Heart left ventricle (tissue), 16 donors: ENCODE measurements at regions of chr7 and their contacts with region 1.

Region 1: DNA sequence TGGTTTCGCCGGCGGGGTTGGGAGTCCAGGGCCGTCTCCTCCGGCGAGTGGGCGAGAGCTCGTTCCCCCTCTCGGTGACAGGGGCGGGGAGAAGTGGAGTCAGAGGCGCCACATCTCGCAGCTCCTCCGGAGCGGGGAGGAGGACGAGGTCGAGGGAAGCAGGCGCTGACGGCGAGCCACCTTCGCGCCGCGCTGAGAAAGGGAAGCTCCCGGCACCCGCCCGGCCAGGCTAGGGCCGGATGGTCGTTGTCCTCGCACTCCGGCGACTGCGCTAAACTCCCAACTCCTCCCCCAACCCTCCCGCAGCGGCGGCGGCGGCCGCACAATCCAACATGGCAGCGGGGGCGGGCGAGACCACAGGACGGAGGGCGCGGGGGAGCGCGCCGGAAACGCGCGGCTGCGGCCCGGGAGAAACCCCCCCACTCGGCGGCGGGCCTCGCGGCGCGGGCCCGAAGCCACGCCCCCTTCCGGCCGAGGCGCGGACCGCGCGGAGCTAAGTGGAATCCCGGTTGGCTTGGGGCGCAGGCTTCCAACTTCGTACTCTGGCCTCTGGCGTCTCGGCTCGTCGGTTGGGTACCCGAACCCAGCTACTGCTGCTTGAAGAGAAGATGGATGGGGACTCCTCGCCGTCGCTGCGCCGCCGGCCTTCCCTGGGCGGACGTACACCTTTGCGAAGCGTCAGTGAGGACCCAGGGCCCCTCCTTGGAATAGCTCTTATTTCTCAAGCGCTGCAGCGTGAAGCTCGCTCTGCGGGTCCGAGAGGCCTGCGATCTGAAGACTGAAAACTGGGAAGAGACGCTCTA is at the start of gene WASL:
- DNase-seq: peak; percentile 93 to 97 (median 94)
- ATAC-seq: peak; percentile 89 to 97 (median 92)
- H3K4me3 ChIP-seq: peak within 1 kb of the TSS; percentile 83 to 92 (median 87)
- H3K27ac ChIP-seq: peak within 1 kb of the TSS; percentile 95 to 99 (median 98)
- H3K4me1 ChIP-seq: peaks cover 4 to 62% (median 47%) of the 10 kb centered on the region in 12 donors
- H3K27me3 ChIP-seq: no peaks in the 10 kb centered on the region
- CTCF ChIP-seq: peak in 6 of 12 donors; percentile 9 to 43 (median 26)
- POLR2A ChIP-seq: peak; percentile 63 to 94
- total RNA-seq, gene WASL: 20.1 to 30.3 (median 26.4) TPM

Region 2: GRCh38 chr7:123534383-123535260 is 214.3 kb before region 1 on chr7 and contains the start of gene IQUB:
- intact Hi-C with region 1: loop called in 1 of 10 experiments (anchors 2 kb)
- DNase-seq: peak; percentile 98 to 99 (median 99)
- ATAC-seq: peak; percentile 95 to 97 (median 96)
- H3K4me3 ChIP-seq: peak within 1 kb of the TSS; percentile 19 to 68 (median 62)
- H3K27ac ChIP-seq: peak within 1 kb of the TSS in 11 of 12 donors; percentile 77 to 92 (median 85)
- H3K4me1 ChIP-seq: peaks cover 0 to 18% (median 10%) of the 10 kb centered on the region in 12 donors
- H3K27me3 ChIP-seq: peaks cover 0 to 4% (median 0%) of the 10 kb centered on the region in 9 donors
- CTCF ChIP-seq: no peak
- POLR2A ChIP-seq: peak in 1 of 2 donors; percentile 14
- total RNA-seq, gene IQUB: 0.24 to 1.3 (median 0.63) TPM

Region 3: GRCh38 chr7:123557398-123558288 is 191.3 kb before region 1 on chr7 and contains the start of gene NDUFA5:
- intact Hi-C with region 1: loop called in 3 of 10 experiments (anchors 2 to 10 kb)
- DNase-seq: peak; percentile 94 to 99 (median 99)
- ATAC-seq: peak; percentile 98 to 99 (median 99)
- H3K4me3 ChIP-seq: peak within 1 kb of the TSS; percentile 59 to 95 (median 78)
- H3K27ac ChIP-seq: peak within 1 kb of the TSS; percentile 84 to 97 (median 92)
- H3K4me1 ChIP-seq: peaks cover 6 to 43% (median 36%) of the 10 kb centered on the region in 12 donors
- H3K27me3 ChIP-seq: no peaks in the 10 kb centered on the region
- CTCF ChIP-seq: no peak
- POLR2A ChIP-seq: peak in 1 of 2 donors; percentile 72
- total RNA-seq, gene NDUFA5: 109 to 332 (median 245) TPM

Region 4: GRCh38 chr7:123655614-123656013 is 93.3 kb before region 1 on chr7 and contains the start of gene LMOD2:
- intact Hi-C with region 1: loop called in 1 of 10 experiments (anchors 5 kb)
- DNase-seq: peak; percentile 69 to 85 (median 79)
- ATAC-seq: peak; percentile 80 to 91 (median 86)
- H3K4me3 ChIP-seq: peak within 1 kb of the TSS; percentile 36 to 69 (median 58)
- H3K27ac ChIP-seq: peak within 1 kb of the TSS; percentile 76 to 98 (median 89)
- H3K4me1 ChIP-seq: peaks cover 0 to 20% (median 2%) of the 10 kb centered on the region in 12 donors
- H3K27me3 ChIP-seq: no peaks in the 10 kb centered on the region
- CTCF ChIP-seq: no peak
- POLR2A ChIP-seq: peak in 1 of 2 donors; percentile 92
- total RNA-seq, gene LMOD2: 348 to 1,479 (median 780) TPM

Region 5: GRCh38 chr7:123682690-123683089 is 66.2 kb before region 1 on chr7:
- intact Hi-C with region 1: loop called in 2 of 10 experiments (anchors 5 kb)
- DNase-seq: no peak
- ATAC-seq: peak in 2 of 4 donors; percentile 24 to 40
- H3K4me3 ChIP-seq: no peak overlapping the region
- H3K27ac ChIP-seq: peak overlapping the region in 3 of 12 donors; percentile 54 to 73 (median 61)
- H3K4me1 ChIP-seq: peaks cover 0 to 41% (median 16%) of the 10 kb centered on the region in 12 donors
- H3K27me3 ChIP-seq: no peaks in the 10 kb centered on the region
- CTCF ChIP-seq: peak; percentile 31 to 70 (median 57)
- POLR2A ChIP-seq: no peak

Region 6: GRCh38 chr7:123692471-123692877 is 56.5 kb before region 1 on chr7:
- intact Hi-C with region 1: loop called in 1 of 10 experiments (anchors 10 kb)
- DNase-seq: no peak
- ATAC-seq: peak in 1 of 4 donors; percentile 50
- H3K4me3 ChIP-seq: no peak overlapping the region
- H3K27ac ChIP-seq: no peak overlapping the region
- H3K4me1 ChIP-seq: peaks cover 0 to 4% (median 0%) of the 10 kb centered on the region in 12 donors
- H3K27me3 ChIP-seq: no peaks in the 10 kb centered on the region
- CTCF ChIP-seq: no peak
- POLR2A ChIP-seq: no peak

Region 7: DNA sequence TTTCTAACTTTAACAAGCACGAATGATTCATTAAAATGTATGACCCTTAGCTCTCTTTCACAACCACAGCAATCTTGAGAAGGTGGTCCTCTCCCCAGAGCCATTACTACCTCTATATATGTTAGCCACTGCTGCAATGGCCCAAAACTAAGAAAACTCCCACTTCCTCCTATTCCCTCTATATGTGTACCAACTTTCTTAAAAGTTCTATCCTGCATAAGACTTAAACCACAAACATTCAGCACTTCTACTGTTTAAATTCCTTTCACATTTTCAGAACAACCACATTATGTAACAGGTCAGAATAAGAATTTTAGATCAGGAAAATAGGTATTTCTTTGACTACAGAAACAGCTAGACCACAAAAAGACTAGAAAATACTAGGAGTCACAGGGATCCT is 36.3 kb before region 1 on chr7:
- intact Hi-C with region 1: loop called in 3 of 10 experiments (anchors 5 kb)
- DNase-seq: no peak
- ATAC-seq: no peak
- H3K4me3 ChIP-seq: no peak overlapping the region
- H3K27ac ChIP-seq: no peak overlapping the region
- H3K4me1 ChIP-seq: peaks cover 0 to 56% (median 34%) of the 10 kb centered on the region in 12 donors
- H3K27me3 ChIP-seq: no peaks in the 10 kb centered on the region
- CTCF ChIP-seq: no peak
- POLR2A ChIP-seq: no peak